ENCODE measurements at regions of chr6 and their contacts with region 1.

Region 1: GRCh38 chr6:27472617-27473400 is at the start of gene ZNF184:
- DNase-seq: peak; percentile 98
- H3K4me3 ChIP-seq: peak within 1 kb of the TSS; percentile 54 to 86 (median 84)
- H3K27ac ChIP-seq: peak within 1 kb of the TSS; percentile 89 to 92 (median 90)
- H3K4me1 ChIP-seq: peaks cover 0 to 23% (median 20%) of the 10 kb centered on the region in 4 donors
- H3K27me3 ChIP-seq: no peaks in the 10 kb centered on the region
- CTCF ChIP-seq: peak in 1 of 4 experiments; percentile 31
- EP300 ChIP-seq: peak in 2 of 4 donors; percentile 8 to 57
- POLR2A ChIP-seq: peak; percentile 66 to 75
- total RNA-seq, gene ZNF184: 4.3 to 8.6 (median 7.3) TPM

Region 2: GRCh38 chr6:27188885-27189418 is 283.9 kb before region 1 on chr6:
- intact Hi-C with region 1: loop called (anchors 5 kb)
- DNase-seq: peak; percentile 79
- H3K4me3 ChIP-seq: peak overlapping the region; percentile 34 to 62 (median 58)
- H3K27ac ChIP-seq: peak overlapping the region; percentile 75 to 86 (median 79)
- H3K4me1 ChIP-seq: peaks cover 0 to 6% (median 2%) of the 10 kb centered on the region in 4 donors
- H3K27me3 ChIP-seq: no peaks in the 10 kb centered on the region
- CTCF ChIP-seq: peak; percentile 25 to 70 (median 55)
- EP300 ChIP-seq: no peak
- POLR2A ChIP-seq: no peak

Region 3: DNA sequence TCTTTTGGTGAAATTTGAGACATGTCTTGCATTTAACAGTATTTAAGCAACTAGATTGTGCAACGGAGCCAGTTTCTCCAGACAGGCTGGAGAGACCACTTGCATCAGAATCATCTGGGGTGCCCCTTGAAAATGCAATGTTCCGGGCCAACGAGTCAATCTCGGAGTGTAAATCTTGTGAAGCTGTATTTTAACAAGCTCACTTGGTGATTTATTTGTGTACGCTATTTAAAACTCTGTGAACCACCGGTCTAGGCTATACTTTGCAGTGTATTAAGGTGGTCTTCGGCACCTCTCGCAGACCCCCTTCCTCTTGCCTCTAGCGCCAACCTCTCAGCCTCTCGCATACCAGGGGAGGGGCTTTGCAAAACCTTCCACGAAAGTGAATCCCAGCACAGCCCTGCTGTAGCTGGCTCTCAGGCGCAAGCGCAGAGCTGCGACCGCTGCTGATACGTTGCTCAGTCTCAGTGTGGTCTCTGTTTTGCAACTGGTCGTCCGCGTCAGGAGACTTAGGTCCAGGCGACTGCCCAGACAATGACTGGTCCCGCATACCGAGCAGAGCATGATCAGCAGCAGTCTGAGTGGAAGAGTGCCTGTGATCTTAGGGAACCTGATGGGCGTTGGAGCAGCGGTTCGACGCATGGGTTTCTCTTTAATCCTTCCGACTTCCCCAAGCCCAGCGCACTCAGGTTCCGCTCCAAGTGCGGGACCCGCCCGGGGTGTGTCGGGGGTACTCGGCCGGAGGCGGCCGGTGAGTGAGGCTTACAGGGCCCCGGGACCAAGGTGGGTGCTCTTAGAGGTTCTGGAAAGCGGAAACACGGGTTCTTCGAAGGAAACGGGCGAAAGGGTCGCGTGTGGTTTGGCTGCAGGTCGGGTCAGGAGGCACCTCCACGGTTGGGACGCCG is 84.3 kb before region 1 on chr6 and contains the start of gene ZNF391:
- intact Hi-C with region 1: loop called (anchors 2 kb)
- DNase-seq: peak; percentile 85
- H3K4me3 ChIP-seq: peak within 1 kb of the TSS; percentile 58 to 71 (median 68)
- H3K27ac ChIP-seq: peak within 1 kb of the TSS; percentile 76 to 81 (median 78)
- H3K4me1 ChIP-seq: peaks cover 0 to 15% (median 8%) of the 10 kb centered on the region in 4 donors
- H3K27me3 ChIP-seq: no peaks in the 10 kb centered on the region
- CTCF ChIP-seq: no peak
- EP300 ChIP-seq: no peak
- POLR2A ChIP-seq: no peak
- total RNA-seq, gene ZNF391: 3.5 to 14.1 (median 5.4) TPM

Region 4: GRCh38 chr6:27400877-27401642 is 71.7 kb before region 1 on chr6:
- intact Hi-C with region 1: no loop called
- DNase-seq: no peak
- H3K4me3 ChIP-seq: no peak overlapping the region
- H3K27ac ChIP-seq: no peak overlapping the region
- H3K4me1 ChIP-seq: no peaks in the 10 kb centered on the region
- H3K27me3 ChIP-seq: no peaks in the 10 kb centered on the region
- CTCF ChIP-seq: no peak
- EP300 ChIP-seq: no peak
- POLR2A ChIP-seq: no peak

Region 5: DNA sequence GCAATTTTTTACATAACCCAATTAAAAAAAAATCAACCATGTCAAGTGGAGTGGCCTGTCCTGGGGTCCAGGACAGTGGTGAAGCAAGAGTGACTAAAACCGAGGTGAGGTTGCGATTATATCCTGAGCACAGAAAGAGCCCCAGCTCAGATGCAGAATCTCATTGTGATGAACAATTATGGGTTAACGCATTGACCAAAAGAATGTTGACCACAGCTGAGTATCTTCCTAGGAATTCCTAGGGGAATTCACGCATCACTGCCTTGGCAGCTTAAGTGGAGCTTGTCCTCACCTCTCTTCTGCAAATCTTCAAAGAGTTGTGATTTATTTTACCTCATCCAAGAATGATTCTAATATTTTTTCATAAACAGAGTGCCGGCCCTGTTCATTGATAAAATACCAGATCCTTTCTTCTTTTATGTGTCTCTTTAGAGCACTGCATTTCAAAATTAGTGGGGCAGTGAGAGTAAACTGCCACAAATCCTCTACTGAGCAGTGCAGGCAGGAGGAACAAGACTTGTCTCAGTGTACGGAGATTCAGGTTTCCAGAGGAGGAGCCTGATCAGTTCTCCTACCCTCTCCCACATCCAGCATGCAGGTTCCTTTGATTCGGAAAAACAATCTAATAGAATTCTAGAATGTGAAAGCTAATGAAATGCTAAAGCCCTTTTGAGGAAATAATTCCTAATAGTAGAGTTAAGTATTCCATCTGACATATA is 60.2 kb after region 1 on chr6:
- intact Hi-C with region 1: no loop called
- DNase-seq: no peak
- H3K4me3 ChIP-seq: no peak overlapping the region
- H3K27ac ChIP-seq: no peak overlapping the region
- H3K4me1 ChIP-seq: no peaks in the 10 kb centered on the region
- H3K27me3 ChIP-seq: peaks cover 0 to 67% (median 0%) of the 10 kb centered on the region in 3 donors
- CTCF ChIP-seq: no peak
- EP300 ChIP-seq: no peak
- POLR2A ChIP-seq: no peak

Region 6: DNA sequence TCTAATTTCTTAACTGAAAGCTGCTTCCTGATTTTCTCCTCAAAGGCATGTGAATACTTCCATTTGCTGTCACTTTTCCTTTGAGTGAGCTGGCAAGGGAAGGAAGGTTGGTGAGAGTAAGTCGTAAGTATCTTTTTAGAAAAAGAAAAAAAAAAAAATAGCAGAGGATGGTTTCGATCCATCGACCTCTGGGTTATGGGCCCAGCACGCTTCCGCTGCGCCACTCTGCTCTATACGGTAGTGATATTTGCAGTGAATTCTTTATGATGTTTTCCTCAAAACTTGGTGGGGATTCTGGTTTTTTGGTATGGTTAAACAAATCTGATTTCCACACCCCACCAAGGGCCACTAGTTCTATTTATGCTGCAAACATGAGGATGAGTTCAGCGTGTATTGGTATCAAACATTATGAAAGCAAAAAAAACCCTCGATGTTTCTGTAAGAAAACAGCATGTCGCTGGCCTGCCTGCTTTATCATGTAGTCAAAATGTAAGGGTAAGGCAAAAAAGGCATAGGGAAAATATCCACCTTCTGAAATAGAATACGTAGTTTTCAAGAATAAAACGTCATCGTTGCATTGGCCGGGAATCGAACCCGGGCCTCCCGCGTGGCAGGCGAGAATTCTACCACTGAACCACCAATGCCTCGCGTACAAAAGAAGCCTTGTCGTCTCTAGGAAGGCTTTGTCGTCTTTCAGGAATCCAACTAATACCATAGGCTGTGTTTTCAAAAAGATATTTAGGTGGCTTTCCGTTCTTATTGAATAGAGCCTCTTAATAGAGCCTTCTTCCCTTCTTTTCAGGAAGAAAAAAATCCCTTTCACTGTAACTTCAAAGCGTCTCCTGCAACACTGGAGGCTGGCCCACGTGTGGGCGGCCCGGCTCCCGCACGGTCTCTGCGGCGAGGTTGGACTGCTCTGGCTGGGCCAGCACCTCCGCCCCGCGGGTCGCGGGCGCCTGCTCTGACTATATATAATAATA is 429.8 kb after region 1 on chr6:
- intact Hi-C with region 1: loop called (anchors 5 kb)
- DNase-seq: peak; percentile 90
- H3K4me3 ChIP-seq: peak overlapping the region; percentile 45 to 57 (median 51)
- H3K27ac ChIP-seq: peak overlapping the region; percentile 83 to 87 (median 86)
- H3K4me1 ChIP-seq: peaks cover 0 to 4% (median 0%) of the 10 kb centered on the region in 4 donors
- H3K27me3 ChIP-seq: no peaks in the 10 kb centered on the region
- CTCF ChIP-seq: no peak
- EP300 ChIP-seq: no peak
- POLR2A ChIP-seq: no peak

Region 7: GRCh38 chr6:28080631-28081485 is 608.0 kb after region 1 on chr6:
- intact Hi-C with region 1: loop called (anchors 10 kb)
- DNase-seq: peak; percentile 97
- H3K4me3 ChIP-seq: peak overlapping the region; percentile 62 to 78 (median 71)
- H3K27ac ChIP-seq: peak overlapping the region; percentile 86 to 93 (median 91)
- H3K4me1 ChIP-seq: peaks cover 0 to 14% (median 9%) of the 10 kb centered on the region in 4 donors
- H3K27me3 ChIP-seq: no peaks in the 10 kb centered on the region
- CTCF ChIP-seq: no peak
- EP300 ChIP-seq: peak in 1 of 4 donors; percentile 43
- POLR2A ChIP-seq: peak in 1 of 2 donors; percentile 41

Measured in sigmoid colon (tissue), 7 donors.